ENCODE measurements at regions of chr15 and their contacts with region 1.

Region 1: DNA sequence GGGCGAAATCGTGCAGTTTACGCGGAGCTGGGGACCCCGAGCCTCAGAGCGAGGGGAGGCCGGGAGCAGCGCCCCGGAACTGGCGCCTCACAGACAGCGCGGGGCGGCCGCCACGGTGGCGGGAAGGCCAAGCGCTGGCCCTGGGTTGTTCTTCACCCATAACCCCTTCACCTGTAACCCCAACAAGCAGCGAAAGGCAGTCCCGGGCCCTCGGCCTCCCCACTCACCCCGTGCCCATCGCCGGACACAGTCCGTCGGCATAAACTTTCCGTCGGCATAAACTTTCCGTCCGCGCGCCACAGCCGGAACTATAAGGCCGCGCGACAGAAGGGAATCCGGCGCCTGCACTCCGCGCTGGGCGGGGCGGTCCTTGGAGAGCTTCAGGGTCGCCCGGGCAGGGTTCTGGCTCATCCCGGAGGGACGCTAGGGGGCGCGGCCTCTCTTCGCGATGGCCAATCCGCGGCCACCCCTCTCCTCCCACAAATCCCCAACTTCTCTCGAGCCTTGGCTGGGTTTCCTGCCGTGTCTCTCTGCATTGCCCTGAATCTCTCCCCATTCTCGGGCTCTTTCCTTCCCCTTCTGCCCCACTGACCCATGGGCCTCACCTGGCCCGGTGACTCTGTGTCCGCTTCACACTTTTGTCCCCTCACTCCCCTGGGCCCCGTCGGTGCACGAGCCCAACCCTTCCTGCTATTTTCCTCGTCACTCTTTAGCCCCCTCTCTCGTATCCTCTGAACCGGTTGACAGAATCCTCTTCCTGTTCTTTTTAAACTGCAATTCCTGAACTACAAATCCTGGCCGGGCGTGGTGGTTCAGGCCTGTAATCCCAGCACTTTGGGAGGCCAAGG is at the start of gene INTS14:
- DNase-seq: peak; percentile 72
- H3K4me3 ChIP-seq: peak within 1 kb of the TSS; percentile 88
- H3K27me3 ChIP-seq: no peaks in the 10 kb centered on the region
- CTCF ChIP-seq: peak; percentile 54
- polyA plus RNA-seq, gene INTS14: 37.3 and 53.3 TPM in 2 replicates

Region 2: DNA sequence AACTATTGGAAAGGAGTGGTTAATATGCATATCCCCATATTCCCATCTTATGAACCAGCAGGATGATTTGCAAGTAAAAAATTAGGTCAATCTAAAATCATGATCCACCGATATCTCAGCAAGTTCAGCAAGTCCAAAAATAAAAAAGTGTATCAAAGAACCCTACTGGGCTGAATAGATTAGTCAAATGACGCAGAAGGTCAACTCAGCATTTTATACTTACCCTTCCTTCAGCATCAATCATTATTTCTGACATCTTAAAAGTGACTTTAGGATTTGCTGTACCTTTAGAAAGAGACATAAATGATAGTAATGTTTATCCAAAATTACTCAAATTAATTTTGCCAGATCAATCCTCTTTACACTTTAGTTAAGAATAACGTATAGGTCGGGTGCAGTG is 126.2 kb before region 1 on chr15:
- CTCF ChIA-PET with region 1: no interaction called
- POLR2A ChIA-PET with region 1: no interaction called
- DNase-seq: no peak
- H3K4me3 ChIP-seq: no peak overlapping the region
- H3K27me3 ChIP-seq: no peaks in the 10 kb centered on the region
- CTCF ChIP-seq: no peak

Region 3: GRCh38 chr15:65530314-65531122 is 80.6 kb before region 1 on chr15 and contains the start of gene HACD3:
- CTCF ChIA-PET with region 1: interaction called, 3 read pairs
- POLR2A ChIA-PET with region 1: interaction called, 15 read pairs
- DNase-seq: no peak
- H3K4me3 ChIP-seq: peak within 1 kb of the TSS; percentile 93
- H3K27me3 ChIP-seq: no peaks in the 10 kb centered on the region
- CTCF ChIP-seq: no peak
- polyA plus RNA-seq, gene HACD3: 40.9 and 56.0 TPM in 2 replicates